ENCODE measurements at regions of chr2 and their contacts with region 1.

Region 1: DNA sequence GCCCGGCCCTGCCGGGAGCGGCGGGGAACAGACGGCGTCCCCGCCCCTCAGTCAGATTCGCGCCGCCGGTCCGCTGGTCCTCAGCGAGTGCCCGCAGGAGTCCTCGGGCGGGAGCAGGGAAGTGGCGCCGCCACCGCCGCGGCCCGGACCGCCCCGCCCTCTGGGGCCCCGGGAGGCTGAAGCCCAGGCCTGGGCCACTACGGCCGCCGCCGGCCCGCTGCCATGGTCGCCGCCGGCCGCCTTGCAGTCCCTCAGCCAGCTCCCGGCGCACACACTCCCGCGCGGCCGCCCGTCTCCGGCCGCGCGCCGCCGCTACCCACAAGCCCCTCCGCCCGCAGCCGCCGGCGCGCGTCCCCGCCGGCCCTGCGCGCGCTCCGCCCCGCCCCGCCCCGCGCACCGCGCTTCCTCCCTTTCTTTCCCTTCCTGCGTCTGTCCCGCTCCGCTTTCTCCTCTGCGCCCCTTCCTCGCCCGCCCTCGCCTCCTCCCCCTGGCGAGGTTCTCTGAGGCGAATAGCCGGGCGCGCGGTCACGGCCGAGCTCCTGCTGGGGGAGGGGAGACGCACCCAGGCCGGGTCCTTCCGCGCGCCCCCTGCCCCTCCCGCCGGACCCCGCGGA is at the start of gene ROCK2:
- DNase-seq: peak; percentile 28 to 81 (median 62)
- ATAC-seq: peak; percentile 61
- H3K4me3 ChIP-seq: peak within 1 kb of the TSS; percentile 79 to 85
- H3K4me3 Mint-ChIP-seq: peak within 1 kb of the TSS; percentile 95
- H3K27ac ChIP-seq: peak within 1 kb of the TSS; percentile 37 to 43
- H3K27ac Mint-ChIP-seq: peak within 1 kb of the TSS; percentile 90
- H3K4me1 ChIP-seq: peaks cover 12% of the 10 kb centered on the region
- H3K4me1 Mint-ChIP-seq: peaks cover 42% of the 10 kb centered on the region
- H3K27me3 ChIP-seq: no peaks in the 10 kb centered on the region
- H3K27me3 Mint-ChIP-seq: no peaks in the 10 kb centered on the region
- CTCF ChIP-seq: no peak
- total RNA-seq, gene ROCK2: 4.1 to 5.7 TPM

Region 2: DNA sequence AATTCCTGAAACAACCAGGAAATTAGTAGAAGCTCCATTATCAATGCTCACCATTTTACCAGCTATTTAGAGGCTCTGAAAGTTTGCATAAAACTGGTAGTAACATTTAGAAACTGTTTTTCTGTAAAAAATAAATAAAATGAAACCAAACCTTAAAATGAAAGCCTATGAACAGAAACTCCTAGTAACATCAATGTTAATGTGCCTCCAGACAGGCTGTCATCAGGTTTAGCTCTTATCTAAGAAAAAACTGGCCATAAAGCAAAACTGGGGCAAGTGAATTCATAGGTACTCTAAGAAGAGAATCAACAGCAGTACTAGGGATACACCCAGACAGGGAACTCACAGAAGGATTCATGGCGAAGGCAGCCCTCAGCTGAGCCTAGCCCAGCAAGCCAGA is 113.5 kb after region 1 on chr2:
- CTCF ChIA-PET with region 1: no interaction called
- POLR2A ChIA-PET with region 1: no interaction called
- intact Hi-C with region 1: loop called in 1 of 2 experiments (anchors 5 kb)
- DNase-seq: no peak
- ATAC-seq: no peak
- H3K4me3 ChIP-seq: no peak overlapping the region
- H3K4me3 Mint-ChIP-seq: no peak overlapping the region
- H3K27ac ChIP-seq: no peak overlapping the region
- H3K27ac Mint-ChIP-seq: no peak overlapping the region
- H3K4me1 ChIP-seq: peaks cover 12% of the 10 kb centered on the region
- H3K4me1 Mint-ChIP-seq: peaks cover 47% of the 10 kb centered on the region
- H3K27me3 ChIP-seq: no peaks in the 10 kb centered on the region
- H3K27me3 Mint-ChIP-seq: no peaks in the 10 kb centered on the region
- CTCF ChIP-seq: no peak

Region 3: GRCh38 chr2:11465497-11466406 is 121.3 kb after region 1 on chr2 and contains the start of gene E2F6:
- CTCF ChIA-PET with region 1: no interaction called
- POLR2A ChIA-PET with region 1: interaction called, 4 read pairs
- intact Hi-C with region 1: loop called (anchors 2 to 5 kb)
- DNase-seq: peak; percentile 68 to 91 (median 81)
- ATAC-seq: peak; percentile 85
- H3K4me3 ChIP-seq: peak within 1 kb of the TSS; percentile 83 to 87
- H3K4me3 Mint-ChIP-seq: peak within 1 kb of the TSS; percentile 96
- H3K27ac ChIP-seq: peak within 1 kb of the TSS; percentile 51 to 70
- H3K27ac Mint-ChIP-seq: peak within 1 kb of the TSS; percentile 91
- H3K4me1 ChIP-seq: peaks cover 13% of the 10 kb centered on the region
- H3K4me1 Mint-ChIP-seq: peaks cover 37% of the 10 kb centered on the region
- H3K27me3 ChIP-seq: no peaks in the 10 kb centered on the region
- H3K27me3 Mint-ChIP-seq: no peaks in the 10 kb centered on the region
- CTCF ChIP-seq: no peak
- total RNA-seq, gene E2F6: 4.9 to 5.0 TPM

Region 4: DNA sequence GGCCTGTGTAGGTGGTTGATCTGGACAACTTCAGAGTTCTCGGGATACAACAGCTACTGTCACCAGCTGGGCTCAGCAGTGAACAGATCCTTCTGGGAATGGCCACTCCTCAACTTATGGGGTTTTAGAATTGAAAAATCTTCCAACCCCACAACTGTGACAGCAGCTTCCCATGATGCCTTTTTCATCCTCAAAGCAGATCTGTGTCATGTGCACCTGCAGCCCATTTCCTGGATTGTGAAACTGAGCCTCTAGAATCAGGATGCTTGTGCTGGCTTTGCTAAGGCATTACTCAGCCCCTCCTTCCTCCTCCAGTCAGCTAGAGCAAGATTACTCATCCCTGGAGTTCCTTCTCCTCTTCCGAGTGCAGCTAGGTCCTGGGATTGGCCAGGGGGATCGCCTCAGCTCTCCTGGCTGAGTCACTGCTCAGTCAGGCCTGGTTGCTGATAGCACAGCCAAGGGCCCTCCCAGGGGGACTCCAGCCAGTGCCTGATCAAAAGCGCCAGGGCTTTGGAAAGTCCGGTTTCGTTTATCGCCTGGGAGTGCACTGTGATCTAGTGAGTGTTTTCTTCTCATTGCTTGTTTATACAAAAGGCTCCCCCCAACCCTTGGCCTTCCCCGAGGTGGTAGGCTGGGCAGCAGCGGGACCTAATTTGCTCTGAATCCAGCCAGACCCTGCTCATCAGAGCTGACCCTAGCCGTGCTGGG is 399.6 kb after region 1 on chr2:
- CTCF ChIA-PET with region 1: no interaction called
- POLR2A ChIA-PET with region 1: no interaction called
- intact Hi-C with region 1: loop called (anchors 5 to 10 kb)
- DNase-seq: peak in 8 of 9 experiments; percentile 48 to 86 (median 68)
- ATAC-seq: peak; percentile 25
- H3K4me3 ChIP-seq: peak overlapping the region in 1 of 2 experiments; percentile 9
- H3K4me3 Mint-ChIP-seq: peak overlapping the region; percentile 54
- H3K27ac ChIP-seq: peak overlapping the region in 1 of 2 experiments; percentile 20
- H3K27ac Mint-ChIP-seq: peak overlapping the region; percentile 56
- H3K4me1 ChIP-seq: peaks cover 41% of the 10 kb centered on the region
- H3K4me1 Mint-ChIP-seq: peaks cover 46% of the 10 kb centered on the region
- H3K27me3 ChIP-seq: no peaks in the 10 kb centered on the region
- H3K27me3 Mint-ChIP-seq: no peaks in the 10 kb centered on the region
- CTCF ChIP-seq: no peak

Region 5: GRCh38 chr2:13106302-13106701 is 1761.9 kb after region 1 on chr2:
- CTCF ChIA-PET with region 1: no interaction called
- POLR2A ChIA-PET with region 1: no interaction called
- intact Hi-C with region 1: no loop called
- DNase-seq: no peak
- ATAC-seq: no peak
- H3K4me3 ChIP-seq: no peak overlapping the region
- H3K4me3 Mint-ChIP-seq: no peak overlapping the region
- H3K27ac ChIP-seq: no peak overlapping the region
- H3K27ac Mint-ChIP-seq: no peak overlapping the region
- H3K4me1 ChIP-seq: no peaks in the 10 kb centered on the region
- H3K4me1 Mint-ChIP-seq: no peaks in the 10 kb centered on the region
- H3K27me3 ChIP-seq: no peaks in the 10 kb centered on the region
- H3K27me3 Mint-ChIP-seq: peaks cover 13% of the 10 kb centered on the region
- CTCF ChIP-seq: no peak

Measured in CD8-positive, alpha-beta T cell (primary cell).